ENCODE measurements at regions of chr11 and their contacts with region 1.

Region 1: DNA sequence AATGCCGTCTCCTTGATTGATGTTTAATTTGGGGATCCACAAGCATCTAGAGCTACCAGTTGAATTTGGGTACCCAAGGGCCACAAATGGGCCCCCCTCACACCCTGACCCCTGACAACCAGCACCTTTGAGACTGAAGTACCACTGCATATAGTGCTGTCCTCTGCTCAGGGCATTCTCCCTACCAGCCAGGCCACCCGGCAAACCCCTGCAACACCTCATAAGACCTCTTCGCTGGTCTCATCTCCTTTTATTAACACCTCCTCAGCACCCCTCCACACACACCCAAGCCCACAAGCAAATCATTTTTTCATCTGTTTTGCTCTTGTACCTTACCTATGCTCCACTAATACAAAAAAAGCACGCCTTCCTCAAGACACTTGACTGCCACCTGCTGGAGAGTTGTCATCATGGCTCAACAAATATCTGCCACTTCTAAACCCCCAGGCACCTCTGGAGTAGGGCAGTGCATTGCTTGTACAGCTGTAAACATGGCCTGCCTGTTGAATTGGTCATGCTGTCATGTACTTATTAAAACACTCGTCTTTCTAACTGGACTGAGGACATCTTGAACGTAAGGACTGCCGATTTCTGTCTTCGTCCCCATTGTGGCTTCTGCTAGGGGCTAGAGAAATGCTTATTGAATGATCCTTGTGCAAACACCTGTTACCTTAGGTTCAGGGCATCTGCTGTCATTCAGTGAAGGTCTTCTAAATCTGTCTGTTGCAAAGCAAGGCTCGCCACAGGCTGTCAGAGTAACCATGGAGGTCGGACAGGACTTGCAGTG is 66.5 kb downstream of the BMAL1 start:
- DNase-seq: no peak
- H3K4me3 ChIP-seq: no peak overlapping the region
- H3K27ac ChIP-seq: no peak overlapping the region
- H3K4me1 ChIP-seq: peaks cover 4 to 32% (median 6%) of the 10 kb centered on the region in 3 donors
- H3K27me3 ChIP-seq: no peaks in the 10 kb centered on the region
- CTCF ChIP-seq: peak; percentile 54 to 88 (median 80)
- POLR2A ChIP-seq: no peak

Region 2: DNA sequence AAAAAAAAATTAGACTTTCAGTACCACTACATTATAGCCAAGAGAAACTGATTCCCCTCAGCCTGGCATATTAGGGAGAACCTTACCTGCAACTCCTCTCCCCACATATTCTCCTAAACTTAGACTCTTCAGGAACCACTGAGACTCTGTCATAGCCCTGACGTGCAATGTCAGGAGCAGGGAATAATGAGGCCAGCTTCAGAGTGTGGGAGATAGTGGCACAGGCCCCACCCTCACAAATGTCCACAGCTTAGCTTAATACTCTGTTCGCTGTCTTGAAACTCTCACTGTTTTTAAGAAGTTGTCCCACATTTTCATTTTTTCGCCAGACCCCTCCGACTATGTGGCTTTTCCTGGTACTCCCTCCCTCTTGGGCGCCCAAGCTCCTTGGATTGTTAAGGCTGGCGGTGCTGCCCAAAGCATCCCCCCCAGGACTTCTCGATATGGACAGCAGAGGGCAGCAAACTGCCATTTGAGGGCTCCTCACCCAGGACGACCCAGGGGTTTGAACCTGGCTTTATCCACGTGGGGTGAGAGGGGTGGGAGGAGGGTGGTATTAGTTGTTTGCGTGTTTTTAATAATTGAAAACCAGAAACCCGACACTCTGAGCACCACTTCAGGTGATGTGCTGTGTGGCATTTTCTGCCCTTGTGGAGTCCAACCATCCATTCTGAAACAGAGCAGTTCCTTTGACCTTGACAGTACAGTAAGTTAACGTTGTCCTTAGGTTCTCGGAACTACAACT is 380.2 kb before region 1 on chr11:
- intact Hi-C with region 1: loop called (anchors 5 kb)
- DNase-seq: no peak
- H3K4me3 ChIP-seq: no peak overlapping the region
- H3K27ac ChIP-seq: no peak overlapping the region
- H3K4me1 ChIP-seq: peaks cover 0 to 19% (median 0%) of the 10 kb centered on the region in 3 donors
- H3K27me3 ChIP-seq: no peaks in the 10 kb centered on the region
- CTCF ChIP-seq: peak; percentile 57 to 90 (median 84)
- POLR2A ChIP-seq: no peak

Region 3: GRCh38 chr11:13210424-13210823 is 133.7 kb before region 1 on chr11:
- intact Hi-C with region 1: loop called (anchors 5 kb)
- DNase-seq: no peak
- H3K4me3 ChIP-seq: no peak overlapping the region
- H3K27ac ChIP-seq: no peak overlapping the region
- H3K4me1 ChIP-seq: peaks cover 11 to 26% (median 13%) of the 10 kb centered on the region in 3 donors
- H3K27me3 ChIP-seq: no peaks in the 10 kb centered on the region
- CTCF ChIP-seq: peak; percentile 43 to 85 (median 68)
- POLR2A ChIP-seq: no peak

Region 4: GRCh38 chr11:13259374-13259773 is 84.8 kb before region 1 on chr11:
- intact Hi-C with region 1: loop called (anchors 5 kb)
- DNase-seq: no peak
- H3K4me3 ChIP-seq: no peak overlapping the region
- H3K27ac ChIP-seq: no peak overlapping the region
- H3K4me1 ChIP-seq: peaks cover 17 to 41% (median 24%) of the 10 kb centered on the region in 3 donors
- H3K27me3 ChIP-seq: no peaks in the 10 kb centered on the region
- CTCF ChIP-seq: no peak
- POLR2A ChIP-seq: no peak